ENCODE measurements at regions of chr3 and their contacts with region 1.

Region 1: GRCh38 chr3:40476478-40477470 is at the start of gene ZNF619:
- DNase-seq: peak; percentile 80
- H3K4me3 Mint-ChIP-seq: peak within 1 kb of the TSS; percentile 90
- H3K27ac Mint-ChIP-seq: peak within 1 kb of the TSS; percentile 99
- H3K4me1 Mint-ChIP-seq: peaks cover 11% of the 10 kb centered on the region
- H3K27me3 Mint-ChIP-seq: no peaks in the 10 kb centered on the region
- CTCF ChIP-seq: no peak
- total RNA-seq, gene ZNF619: 8.3 and 8.7 TPM in 2 replicates

Region 2: GRCh38 chr3:40505599-40506462 is 29.1 kb after region 1 on chr3 and contains the start of gene ZNF620:
- CTCF ChIA-PET with region 1: no interaction called
- POLR2A ChIA-PET with region 1: interaction called, 5 read pairs
- intact Hi-C with region 1: loop called (anchors 2 kb)
- DNase-seq: peak; percentile 48
- H3K4me3 Mint-ChIP-seq: peak within 1 kb of the TSS; percentile 77
- H3K27ac Mint-ChIP-seq: peak within 1 kb of the TSS; percentile 70
- H3K4me1 Mint-ChIP-seq: peaks cover 13% of the 10 kb centered on the region
- H3K27me3 Mint-ChIP-seq: no peaks in the 10 kb centered on the region
- CTCF ChIP-seq: no peak
- total RNA-seq, gene ZNF620: 2.8 and 2.9 TPM in 2 replicates

Measured in MCF 10A (cell line).